ENCODE measurements at regions of chr1 and their contacts with region 1.

Region 1: GRCh38 chr1:156385534-156386031 is 16.6 kb downstream of the RHBG start:
- DNase-seq: peak; percentile 57 to 90 (median 76)
- ATAC-seq: peak; percentile 89 to 92
- H3K4me3 Mint-ChIP-seq: peak overlapping the region in 1 of 10 donors; percentile 31
- H3K27ac Mint-ChIP-seq: peak overlapping the region in 5 of 10 donors; percentile 1 to 77 (median 26)
- H3K4me1 Mint-ChIP-seq: peaks cover 4 to 14% (median 7%) of the 10 kb centered on the region in 4 donors
- H3K27me3 Mint-ChIP-seq: peaks cover 5 to 40% (median 33%) of the 10 kb centered on the region in 5 donors

Region 2: DNA sequence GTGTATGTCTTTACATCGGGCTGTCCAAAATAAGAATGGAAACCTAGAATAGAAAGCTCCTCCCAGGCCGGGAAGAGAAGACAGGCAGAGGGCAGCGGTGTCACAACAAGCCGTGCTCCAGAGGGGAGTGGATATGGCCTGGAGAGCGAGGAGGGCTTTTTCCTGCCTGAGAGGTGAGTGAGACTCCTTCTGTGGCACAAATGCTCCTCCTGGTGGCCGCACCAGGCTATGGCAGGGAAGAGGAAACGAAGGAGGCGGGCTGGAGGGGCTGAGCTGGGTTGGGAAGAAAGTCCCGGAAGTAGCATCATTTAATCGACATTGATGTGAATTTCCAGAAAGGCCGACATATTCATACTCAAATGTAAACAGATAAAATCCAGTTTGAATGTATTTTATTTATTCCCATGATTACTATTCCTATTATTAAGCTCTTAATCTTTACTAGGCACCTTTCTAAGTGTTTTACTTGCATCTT is 60.2 kb after region 1 on chr1:
- POLR2A ChIA-PET with region 1: interaction called, 18 read pairs
- DNase-seq: peak; percentile 63 to 88 (median 78)
- ATAC-seq: peak; percentile 87 to 94
- H3K4me3 Mint-ChIP-seq: peak overlapping the region in 4 of 10 donors; percentile 24 to 34 (median 27)
- H3K27ac Mint-ChIP-seq: peak overlapping the region in 4 of 10 donors; percentile 13 to 58 (median 28)
- H3K4me1 Mint-ChIP-seq: peaks cover 3 to 9% (median 6%) of the 10 kb centered on the region in 4 donors
- H3K27me3 Mint-ChIP-seq: peaks cover 29 to 73% (median 46%) of the 10 kb centered on the region in 5 donors

Measured in naive thymus-derived CD8-positive, alpha-beta T cell (primary cell).